Tibial artery (tissue), 4 donors: ENCODE measurements at regions of chr5 and their contacts with region 1.

Region 1: GRCh38 chr5:43066799-43067741 is 27.0 kb upstream of the ANXA2R start:
- DNase-seq: peak; percentile 93
- H3K4me3 ChIP-seq: peak overlapping the region; percentile 87 to 90
- H3K27ac ChIP-seq: peak overlapping the region; percentile 99 to 100
- H3K4me1 ChIP-seq: peaks cover 0 to 43% (median 32%) of the 10 kb centered on the region in 4 donors
- H3K27me3 ChIP-seq: no peaks in the 10 kb centered on the region
- CTCF ChIP-seq: no peak

Region 2: DNA sequence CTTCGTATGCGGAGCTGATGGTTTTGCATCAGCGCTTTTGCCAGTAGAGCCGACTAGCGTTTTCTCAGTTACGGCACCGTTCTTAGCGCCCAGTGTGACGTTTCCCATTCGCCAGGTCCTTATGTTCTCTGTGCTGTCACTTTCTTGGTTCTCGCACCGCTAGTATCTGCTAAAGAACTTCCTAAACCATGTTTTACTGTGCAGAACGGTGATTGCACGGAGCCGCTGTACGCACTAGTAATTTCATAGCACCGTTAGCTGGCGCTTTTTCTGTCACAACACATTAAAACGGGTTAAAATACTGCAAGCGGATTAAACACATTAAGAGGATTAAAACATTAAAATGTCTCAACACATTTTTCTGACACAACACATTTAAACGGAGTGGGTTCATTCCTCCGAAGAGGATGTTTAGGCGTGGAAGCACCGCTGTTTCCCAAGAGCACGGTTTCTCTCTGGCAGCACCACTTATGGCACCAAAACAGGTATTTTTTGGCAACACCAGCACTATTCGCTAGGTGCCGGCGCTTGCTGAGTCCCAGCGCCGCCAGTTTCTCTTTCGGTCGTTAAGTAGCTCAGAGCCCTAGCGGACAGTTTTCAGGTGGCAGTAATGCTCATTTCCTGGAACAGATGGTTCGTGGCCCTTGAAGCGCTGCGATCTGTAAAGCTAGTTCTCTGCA is 47.3 kb before region 1 on chr5:
- intact Hi-C with region 1: loop called (anchors 10 kb)
- DNase-seq: no peak
- H3K4me3 ChIP-seq: peak overlapping the region; percentile 58 to 64
- H3K27ac ChIP-seq: peak overlapping the region; percentile 93 to 95
- H3K4me1 ChIP-seq: peaks cover 0 to 10% (median 7%) of the 10 kb centered on the region in 4 donors
- H3K27me3 ChIP-seq: no peaks in the 10 kb centered on the region
- CTCF ChIP-seq: peak; percentile 29 to 31

Region 3: GRCh38 chr5:43105369-43106289 is 38.6 kb after region 1 on chr5:
- intact Hi-C with region 1: no loop called
- DNase-seq: peak; percentile 88 to 93
- H3K4me3 ChIP-seq: peak overlapping the region; percentile 39 to 50
- H3K27ac ChIP-seq: peak overlapping the region; percentile 36 to 50
- H3K4me1 ChIP-seq: peaks cover 0 to 9% (median 2%) of the 10 kb centered on the region in 4 donors
- H3K27me3 ChIP-seq: no peaks in the 10 kb centered on the region
- CTCF ChIP-seq: peak; percentile 98 to 99

Region 4: DNA sequence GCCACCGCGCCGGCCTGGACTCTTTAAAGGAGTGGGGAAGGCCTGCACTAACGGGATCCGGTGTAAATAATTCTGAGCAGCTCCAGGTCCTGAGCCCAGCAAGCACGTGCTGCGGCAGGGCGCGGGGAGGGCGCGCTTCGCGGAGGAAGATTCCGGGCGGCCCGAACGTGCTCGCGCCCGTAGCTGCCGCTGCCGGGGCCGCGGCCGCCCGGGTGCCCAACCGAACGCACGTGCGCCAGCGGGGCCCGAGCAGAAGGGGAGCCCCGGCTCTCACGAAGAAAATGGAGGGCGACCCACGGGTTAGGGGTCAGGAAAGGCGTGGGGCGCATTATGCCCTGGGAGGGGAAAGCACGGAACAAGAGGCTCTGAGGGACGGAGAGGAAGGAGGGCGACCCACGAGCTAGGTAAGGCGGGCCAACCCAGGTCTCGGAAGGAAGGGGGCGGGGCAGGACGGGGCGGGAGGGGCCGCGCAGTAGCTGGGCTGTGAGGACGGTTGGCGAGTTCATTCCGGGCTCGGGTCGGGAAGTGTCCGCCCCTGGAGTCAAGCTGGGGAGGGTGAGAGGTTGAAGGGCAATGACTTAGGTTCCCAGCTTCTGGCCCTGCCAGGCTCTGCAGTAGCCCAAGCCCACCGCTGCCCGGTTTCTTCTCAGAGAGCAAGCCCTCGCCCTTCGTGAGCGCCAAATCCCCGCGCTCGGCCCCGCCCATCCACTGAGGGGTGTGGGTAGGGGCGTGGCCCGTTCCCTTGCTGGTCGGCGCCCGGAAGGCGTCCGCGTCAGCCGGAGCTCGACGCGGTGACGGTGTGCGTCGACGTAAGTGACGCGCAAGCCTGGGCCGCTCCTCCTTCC is 53.9 kb after region 1 on chr5 and contains the start of gene ZNF131:
- intact Hi-C with region 1: loop called (anchors 5 kb)
- DNase-seq: peak; percentile 95 to 98
- H3K4me3 ChIP-seq: peak within 1 kb of the TSS; percentile 65 to 72
- H3K27ac ChIP-seq: peak within 1 kb of the TSS; percentile 90 to 93
- H3K4me1 ChIP-seq: peaks cover 0 to 43% (median 25%) of the 10 kb centered on the region in 4 donors
- H3K27me3 ChIP-seq: no peaks in the 10 kb centered on the region
- CTCF ChIP-seq: no peak